Activated CD4-positive, alpha-beta T cell treated with anti-CD3 and anti-CD28 coated beads for 36 hours (primary cell): ENCODE measurements at regions of chr11 and their contacts with region 1.

Region 1: DNA sequence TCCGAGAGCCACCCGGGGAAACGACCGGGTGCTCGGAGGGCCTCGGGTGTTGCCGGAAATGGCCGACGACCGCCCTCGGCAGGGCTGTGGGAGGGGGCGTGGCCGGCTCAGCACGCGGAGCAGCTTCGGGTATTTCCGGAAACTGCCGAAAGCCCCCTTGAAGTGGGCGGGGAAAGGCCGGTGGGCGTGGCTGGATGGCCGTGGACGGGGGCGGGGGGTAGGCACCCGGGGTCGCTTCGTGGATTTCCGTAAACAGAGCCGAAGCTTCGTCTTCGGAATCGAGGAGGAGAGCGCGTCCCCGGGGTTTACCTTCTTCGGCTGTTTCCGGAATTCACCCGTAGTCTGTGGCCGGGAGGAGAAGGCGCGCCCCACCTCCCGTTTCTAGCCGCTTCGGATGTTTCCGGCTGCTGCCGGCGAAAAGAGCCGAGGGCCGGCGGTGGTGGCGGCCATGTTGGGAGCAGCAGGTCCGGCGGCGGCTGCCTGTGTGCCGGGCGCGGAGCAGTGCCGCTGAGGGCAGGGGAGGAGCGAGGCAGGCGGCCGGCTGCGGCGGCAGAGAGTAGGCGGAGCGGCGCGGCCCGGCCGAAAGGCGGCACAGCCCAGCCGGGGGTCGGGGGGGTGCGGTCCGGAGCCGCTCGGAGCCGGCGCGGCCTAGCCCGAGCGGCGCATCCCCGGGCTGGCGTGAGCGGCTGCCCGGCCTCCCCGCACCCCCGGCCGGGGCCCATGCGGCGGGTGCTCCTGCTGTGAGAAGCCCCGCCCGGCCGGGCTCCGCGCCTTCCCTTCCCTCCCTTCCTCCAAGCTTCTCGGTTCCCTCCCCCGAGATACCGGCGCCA is at the start of gene MARK2:
- DNase-seq: peak; percentile 100
- ATAC-seq: peak; percentile 90
- H3K4me3 Mint-ChIP-seq: peak within 1 kb of the TSS; percentile 97
- H3K27ac Mint-ChIP-seq: peak within 1 kb of the TSS; percentile 87
- H3K4me1 Mint-ChIP-seq: peaks cover 48% of the 10 kb centered on the region
- H3K27me3 Mint-ChIP-seq: no peaks in the 10 kb centered on the region
- total RNA-seq, gene MARK2: 24.3 to 24.9 TPM

Region 2: GRCh38 chr11:63671322-63672155 is 167.4 kb before region 1 on chr11 and contains the start of gene ATL3:
- CTCF ChIA-PET with region 1: no interaction called
- POLR2A ChIA-PET with region 1: no interaction called
- intact Hi-C with region 1: loop called in 1 of 2 experiments (anchors 1 kb)
- DNase-seq: peak; percentile 96
- ATAC-seq: peak; percentile 86
- H3K4me3 Mint-ChIP-seq: peak within 1 kb of the TSS; percentile 85
- H3K27ac Mint-ChIP-seq: peak within 1 kb of the TSS; percentile 90
- H3K4me1 Mint-ChIP-seq: peaks cover 45% of the 10 kb centered on the region
- H3K27me3 Mint-ChIP-seq: no peaks in the 10 kb centered on the region
- total RNA-seq, gene ATL3: 18.9 to 25.7 TPM

Region 3: GRCh38 chr11:63813035-63813562 is 25.8 kb before region 1 on chr11 and contains the start of gene SPINDOC:
- CTCF ChIA-PET with region 1: interaction called, 8 read pairs
- POLR2A ChIA-PET with region 1: no interaction called
- intact Hi-C with region 1: loop called in 1 of 2 experiments (anchors 1 kb)
- DNase-seq: peak; percentile 80
- ATAC-seq: peak; percentile 91
- H3K4me3 Mint-ChIP-seq: peak within 1 kb of the TSS; percentile 77
- H3K27ac Mint-ChIP-seq: no peak within 1 kb of the TSS
- H3K4me1 Mint-ChIP-seq: peaks cover 21% of the 10 kb centered on the region
- H3K27me3 Mint-ChIP-seq: no peaks in the 10 kb centered on the region
- total RNA-seq, gene SPINDOC: 25.7 to 26.2 TPM

Region 4: GRCh38 chr11:63906585-63906984 is 67.7 kb after region 1 on chr11:
- CTCF ChIA-PET with region 1: interaction called, 23 read pairs
- POLR2A ChIA-PET with region 1: no interaction called
- intact Hi-C with region 1: loop called (anchors 1 kb)
- DNase-seq: peak; percentile 79
- ATAC-seq: peak; percentile 70
- H3K4me3 Mint-ChIP-seq: no peak overlapping the region
- H3K27ac Mint-ChIP-seq: no peak overlapping the region
- H3K4me1 Mint-ChIP-seq: no peaks in the 10 kb centered on the region
- H3K27me3 Mint-ChIP-seq: no peaks in the 10 kb centered on the region

Region 5: DNA sequence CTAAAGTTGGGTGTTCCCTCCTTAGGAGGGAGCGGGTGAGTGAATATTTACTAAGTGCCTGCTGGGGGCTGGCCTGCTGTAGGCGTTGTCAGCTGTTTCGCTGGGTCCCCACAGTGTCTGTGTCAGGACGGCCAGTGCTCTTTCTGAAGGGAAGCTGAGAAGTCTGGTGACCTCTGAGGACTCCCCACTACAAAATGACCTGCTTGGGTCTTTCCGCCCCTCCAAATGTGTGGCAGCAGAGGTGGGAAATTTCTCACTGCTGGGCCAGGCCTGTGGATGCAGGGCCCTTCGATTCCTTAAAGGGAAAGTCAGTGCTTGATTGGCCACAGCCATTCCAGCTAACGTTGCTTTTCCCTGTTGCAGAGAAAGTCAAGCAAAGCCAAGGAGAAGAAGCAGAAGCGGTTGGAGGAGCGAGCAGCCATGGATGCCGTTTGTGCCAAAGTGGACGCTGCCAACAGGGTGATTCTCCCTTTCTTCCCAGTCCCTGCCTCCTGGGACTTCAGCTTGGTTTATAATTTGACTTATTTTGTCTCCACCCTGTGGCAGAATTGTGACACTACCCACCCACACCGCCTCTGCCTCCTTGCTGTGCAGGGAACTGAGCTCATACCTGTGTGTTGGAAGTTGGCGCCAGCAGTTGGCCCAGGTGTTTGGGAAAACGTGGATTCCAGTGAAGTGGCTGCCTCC is 106.7 kb after region 1 on chr11:
- CTCF ChIA-PET with region 1: interaction called, 72 read pairs
- POLR2A ChIA-PET with region 1: no interaction called
- intact Hi-C with region 1: loop called (anchors 1 kb)
- DNase-seq: peak; percentile 69
- ATAC-seq: peak; percentile 80
- H3K4me3 Mint-ChIP-seq: no peak overlapping the region
- H3K27ac Mint-ChIP-seq: no peak overlapping the region
- H3K4me1 Mint-ChIP-seq: peaks cover under 1% of the 10 kb centered on the region
- H3K27me3 Mint-ChIP-seq: no peaks in the 10 kb centered on the region

Region 6: GRCh38 chr11:64152841-64153691 is 314.2 kb after region 1 on chr11:
- CTCF ChIA-PET with region 1: interaction called, 6 read pairs
- POLR2A ChIA-PET with region 1: no interaction called
- intact Hi-C with region 1: loop called (anchors 1 kb)
- DNase-seq: peak; percentile 85
- ATAC-seq: peak; percentile 97
- H3K4me3 Mint-ChIP-seq: no peak overlapping the region
- H3K27ac Mint-ChIP-seq: no peak overlapping the region
- H3K4me1 Mint-ChIP-seq: peaks cover 3% of the 10 kb centered on the region
- H3K27me3 Mint-ChIP-seq: no peaks in the 10 kb centered on the region

Region 7: GRCh38 chr11:64240394-64241174 is 401.7 kb after region 1 on chr11 and contains the start of gene FKBP2:
- CTCF ChIA-PET with region 1: no interaction called
- POLR2A ChIA-PET with region 1: no interaction called
- intact Hi-C with region 1: loop called in 1 of 2 experiments (anchors 2 kb)
- DNase-seq: peak; percentile 99
- ATAC-seq: peak; percentile 68
- H3K4me3 Mint-ChIP-seq: peak within 1 kb of the TSS; percentile 86
- H3K27ac Mint-ChIP-seq: peak within 1 kb of the TSS; percentile 99
- H3K4me1 Mint-ChIP-seq: peaks cover 31% of the 10 kb centered on the region
- H3K27me3 Mint-ChIP-seq: no peaks in the 10 kb centered on the region
- total RNA-seq, gene FKBP2: 19.9 to 21.3 TPM